Activated B cell treated with CpG ODN at 0.5 μM for 24 hours (primary cell): ENCODE measurements at regions of chr17 and their contacts with region 1.

Region 1: GRCh38 chr17:75673487-75673886 is 6.3 kb downstream of the SAP30BP start:
- DNase-seq: no peak
- ATAC-seq: no peak
- H3K4me3 Mint-ChIP-seq: no peak overlapping the region
- H3K27ac Mint-ChIP-seq: no peak overlapping the region
- H3K4me1 Mint-ChIP-seq: peaks cover 28% of the 10 kb centered on the region
- H3K27me3 Mint-ChIP-seq: no peaks in the 10 kb centered on the region
- CTCF ChIP-seq: no peak

Region 2: DNA sequence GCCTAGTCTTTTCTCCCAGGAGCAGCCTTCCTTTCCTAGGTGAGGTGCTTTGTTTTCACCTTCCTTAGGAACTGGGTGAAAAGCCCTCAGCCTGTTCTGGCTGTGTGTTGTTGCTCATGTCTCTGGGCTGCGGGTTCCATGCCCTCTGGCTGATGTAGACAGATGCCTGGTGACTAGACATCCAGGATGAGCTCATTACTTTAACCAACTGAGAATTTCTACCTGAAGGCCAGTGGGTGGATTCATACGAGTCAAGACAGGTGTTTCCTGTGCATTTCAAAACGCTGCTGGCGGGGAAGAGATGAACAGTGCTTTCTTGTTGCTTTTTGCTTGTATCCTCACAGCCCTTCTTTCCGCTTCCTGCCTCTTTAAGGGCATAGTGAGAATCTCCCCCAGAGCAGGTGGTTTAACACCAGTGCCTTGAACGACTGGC is 16.0 kb after region 1 on chr17:
- CTCF ChIA-PET with region 1: interaction called, 12 read pairs
- POLR2A ChIA-PET with region 1: interaction called, 6 read pairs
- intact Hi-C with region 1: no loop called
- DNase-seq: peak; percentile 24
- ATAC-seq: peak; percentile 69
- H3K4me3 Mint-ChIP-seq: peak overlapping the region; percentile 70
- H3K27ac Mint-ChIP-seq: peak overlapping the region; percentile 92
- H3K4me1 Mint-ChIP-seq: peaks cover 66% of the 10 kb centered on the region
- H3K27me3 Mint-ChIP-seq: no peaks in the 10 kb centered on the region
- CTCF ChIP-seq: no peak